Naive thymus-derived CD4-positive, alpha-beta T cell (primary cell): ENCODE measurements at regions of chr7 and their contacts with region 1.

Region 1: DNA sequence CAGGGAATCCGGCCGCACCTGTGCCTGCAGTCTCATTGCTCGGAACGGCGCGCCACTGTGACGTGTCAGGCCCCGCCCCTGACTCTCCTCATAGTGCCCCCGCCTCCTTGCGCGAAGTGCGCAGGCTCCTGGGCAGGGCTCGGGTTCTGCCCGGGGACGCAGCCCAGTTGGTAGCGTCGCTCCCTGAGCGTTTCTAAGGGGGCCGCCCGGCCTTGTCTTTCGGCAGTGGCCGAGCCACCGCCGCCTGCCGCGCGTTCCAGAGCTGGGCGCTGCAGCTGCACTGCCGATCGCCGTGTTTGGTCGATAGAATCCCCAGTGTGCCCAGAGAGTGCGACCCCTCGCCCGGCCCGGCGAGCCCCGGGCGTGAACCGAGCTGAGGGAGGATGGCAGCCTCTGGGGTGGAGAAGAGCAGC is at the start of gene KLHL7:
- DNase-seq: peak; percentile 90 to 95 (median 93)
- ATAC-seq: peak; percentile 99
- H3K4me3 ChIP-seq: peak within 1 kb of the TSS; percentile 93
- H3K4me3 Mint-ChIP-seq: peak within 1 kb of the TSS; percentile 90 to 99 (median 96)
- H3K27ac ChIP-seq: peak within 1 kb of the TSS; percentile 90
- H3K27ac Mint-ChIP-seq: peak within 1 kb of the TSS; percentile 91 to 97 (median 96)
- H3K4me1 ChIP-seq: peaks cover 4 to 18% of the 10 kb centered on the region in 2 donors
- H3K4me1 Mint-ChIP-seq: peaks cover 33 to 51% (median 47%) of the 10 kb centered on the region in 7 donors
- H3K27me3 ChIP-seq: no peaks in the 10 kb centered on the region
- H3K27me3 Mint-ChIP-seq: no peaks in the 10 kb centered on the region
- total RNA-seq, gene KLHL7: 16.9 to 22.9 (median 22.7) TPM

Region 2: GRCh38 chr7:22822486-22823141 is 283.0 kb before region 1 on chr7 and contains the start of gene TOMM7:
- CTCF ChIA-PET with region 1: no interaction called
- POLR2A ChIA-PET with region 1: interaction called, 7 read pairs
- intact Hi-C with region 1: loop called (anchors 1 kb)
- DNase-seq: peak; percentile 68 to 92 (median 90)
- ATAC-seq: peak; percentile 99
- H3K4me3 ChIP-seq: peak within 1 kb of the TSS; percentile 83
- H3K4me3 Mint-ChIP-seq: peak within 1 kb of the TSS; percentile 93 to 100 (median 99)
- H3K27ac ChIP-seq: peak within 1 kb of the TSS; percentile 94
- H3K27ac Mint-ChIP-seq: peak within 1 kb of the TSS; percentile 94 to 100 (median 99)
- H3K4me1 ChIP-seq: peaks cover 6 to 19% of the 10 kb centered on the region in 2 donors
- H3K4me1 Mint-ChIP-seq: peaks cover 15 to 53% (median 43%) of the 10 kb centered on the region in 7 donors
- H3K27me3 ChIP-seq: peaks cover 0 to 4% of the 10 kb centered on the region in 2 donors
- H3K27me3 Mint-ChIP-seq: peaks cover 15 to 36% (median 19%) of the 10 kb centered on the region in 5 donors
- total RNA-seq, gene TOMM7: 302 to 737 (median 649) TPM

Region 3: DNA sequence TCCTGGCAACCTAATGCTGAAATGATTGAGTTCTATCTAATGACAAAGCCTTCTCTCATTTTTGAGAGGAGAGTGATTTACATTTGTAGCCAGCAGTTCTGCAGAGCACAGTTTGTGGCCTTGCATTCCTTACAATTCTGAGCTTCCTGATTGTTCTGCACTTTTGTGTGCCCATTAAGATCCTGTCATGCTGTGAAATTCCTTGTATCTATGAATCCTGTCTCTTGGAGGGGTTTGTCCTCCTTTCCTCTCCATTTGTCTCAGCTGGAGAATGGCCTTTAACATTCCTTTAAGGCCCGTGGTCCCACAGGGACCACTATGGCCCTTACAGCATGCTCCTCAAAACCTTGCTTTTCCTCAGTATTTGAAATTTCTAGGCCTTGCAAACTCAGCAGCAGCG is 10.3 kb after region 1 on chr7:
- CTCF ChIA-PET with region 1: interaction called, 3 read pairs
- POLR2A ChIA-PET with region 1: interaction called, 7 read pairs
- intact Hi-C with region 1: loop called in 1 of 2 experiments (anchors 1 kb)
- DNase-seq: no peak
- ATAC-seq: no peak
- H3K4me3 ChIP-seq: no peak overlapping the region
- H3K4me3 Mint-ChIP-seq: no peak overlapping the region
- H3K27ac ChIP-seq: no peak overlapping the region
- H3K27ac Mint-ChIP-seq: no peak overlapping the region
- H3K4me1 ChIP-seq: no peaks in the 10 kb centered on the region
- H3K4me1 Mint-ChIP-seq: peaks cover 3 to 57% (median 37%) of the 10 kb centered on the region in 7 donors
- H3K27me3 ChIP-seq: no peaks in the 10 kb centered on the region
- H3K27me3 Mint-ChIP-seq: no peaks in the 10 kb centered on the region

Region 4: GRCh38 chr7:23123007-23123406 is 17.4 kb after region 1 on chr7:
- CTCF ChIA-PET with region 1: interaction called, 3 read pairs
- POLR2A ChIA-PET with region 1: no interaction called
- intact Hi-C with region 1: loop called in 1 of 2 experiments (anchors 2 kb)
- DNase-seq: no peak
- ATAC-seq: no peak
- H3K4me3 ChIP-seq: no peak overlapping the region
- H3K4me3 Mint-ChIP-seq: no peak overlapping the region
- H3K27ac ChIP-seq: no peak overlapping the region
- H3K27ac Mint-ChIP-seq: no peak overlapping the region
- H3K4me1 ChIP-seq: no peaks in the 10 kb centered on the region
- H3K4me1 Mint-ChIP-seq: peaks cover 0 to 13% (median 6%) of the 10 kb centered on the region in 7 donors
- H3K27me3 ChIP-seq: no peaks in the 10 kb centered on the region
- H3K27me3 Mint-ChIP-seq: no peaks in the 10 kb centered on the region

Region 5: GRCh38 chr7:23474094-23474828 is 368.6 kb after region 1 on chr7:
- CTCF ChIA-PET with region 1: no interaction called
- POLR2A ChIA-PET with region 1: no interaction called
- intact Hi-C with region 1: loop called in 1 of 2 experiments (anchors 5 kb)
- DNase-seq: peak in 6 of 9 donors; percentile 13 to 90 (median 26)
- ATAC-seq: peak; percentile 80
- H3K4me3 ChIP-seq: no peak overlapping the region
- H3K4me3 Mint-ChIP-seq: peak overlapping the region; percentile 13 to 85 (median 54)
- H3K27ac ChIP-seq: no peak overlapping the region
- H3K27ac Mint-ChIP-seq: peak overlapping the region in 5 of 9 donors; percentile 21 to 70 (median 69)
- H3K4me1 ChIP-seq: peaks cover 12 to 22% of the 10 kb centered on the region in 2 donors
- H3K4me1 Mint-ChIP-seq: peaks cover 17 to 35% (median 29%) of the 10 kb centered on the region in 7 donors
- H3K27me3 ChIP-seq: peaks cover 78 to 85% of the 10 kb centered on the region in 2 donors
- H3K27me3 Mint-ChIP-seq: peaks cover 67 to 75% (median 70%) of the 10 kb centered on the region in 5 donors